Sigmoid colon (tissue), 7 donors: ENCODE measurements at regions of chr9 and their contacts with region 1.

Region 1: GRCh38 chr9:17531642-17532254 is 47.1 kb upstream of the SH3GL2 start:
- DNase-seq: no peak
- H3K4me3 ChIP-seq: no peak overlapping the region
- H3K27ac ChIP-seq: no peak overlapping the region
- H3K4me1 ChIP-seq: no peaks in the 10 kb centered on the region
- H3K27me3 ChIP-seq: no peaks in the 10 kb centered on the region
- CTCF ChIP-seq: peak in 2 of 4 experiments; percentile 39 to 43
- EP300 ChIP-seq: no peak
- POLR2A ChIP-seq: no peak

Region 2: GRCh38 chr9:17380126-17380861 is 151.5 kb before region 1 on chr9:
- intact Hi-C with region 1: no loop called
- DNase-seq: no peak
- H3K4me3 ChIP-seq: no peak overlapping the region
- H3K27ac ChIP-seq: no peak overlapping the region
- H3K4me1 ChIP-seq: no peaks in the 10 kb centered on the region
- H3K27me3 ChIP-seq: no peaks in the 10 kb centered on the region
- CTCF ChIP-seq: no peak
- EP300 ChIP-seq: no peak
- POLR2A ChIP-seq: no peak

Region 3: GRCh38 chr9:17588395-17588794 is 56.6 kb after region 1 on chr9:
- intact Hi-C with region 1: no loop called
- DNase-seq: no peak
- H3K4me3 ChIP-seq: no peak overlapping the region
- H3K27ac ChIP-seq: no peak overlapping the region
- H3K4me1 ChIP-seq: no peaks in the 10 kb centered on the region
- H3K27me3 ChIP-seq: no peaks in the 10 kb centered on the region
- CTCF ChIP-seq: no peak
- EP300 ChIP-seq: no peak
- POLR2A ChIP-seq: no peak

Region 4: DNA sequence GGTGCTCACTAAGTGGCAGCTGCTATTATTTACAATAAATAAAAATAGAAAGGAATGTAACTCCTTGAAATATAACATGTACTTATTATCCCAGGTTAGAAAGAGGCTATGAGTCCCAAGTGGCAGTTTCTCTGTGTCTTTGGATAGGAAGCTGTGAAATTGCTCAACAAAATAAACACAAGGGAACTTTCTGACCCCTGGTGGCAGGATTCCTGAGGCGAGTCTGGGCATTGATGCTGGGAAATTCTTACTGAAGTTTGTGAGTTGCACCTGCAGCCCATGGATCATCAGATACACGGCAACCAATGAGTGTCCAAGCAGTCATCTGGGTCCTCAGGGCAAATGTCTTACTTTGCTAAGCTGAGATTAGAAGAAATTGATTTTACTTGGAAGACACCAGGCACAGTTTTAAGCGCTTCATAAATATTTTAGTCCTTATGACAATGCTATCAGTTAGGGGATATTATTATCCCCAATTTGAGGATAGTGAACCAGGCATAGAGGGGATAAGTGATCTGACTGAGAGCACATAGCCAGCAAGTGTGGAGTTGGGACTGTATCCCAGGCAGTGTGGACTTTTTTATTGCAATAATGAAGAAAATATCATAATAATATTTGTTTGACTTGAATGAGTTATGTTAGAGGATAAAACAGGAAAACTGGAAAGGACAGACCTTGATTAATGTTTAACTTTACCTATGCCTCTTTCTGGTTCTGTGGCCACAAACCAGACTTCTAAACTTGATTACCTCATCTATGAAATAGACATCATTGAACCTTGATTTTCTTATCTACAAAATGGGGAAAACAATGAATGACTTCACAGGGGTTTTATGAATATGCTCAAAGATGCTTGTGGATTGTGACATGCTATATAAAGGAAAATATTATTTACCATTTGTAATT is 676.7 kb after region 1 on chr9:
- intact Hi-C with region 1: loop called (anchors 5 kb)
- DNase-seq: no peak
- H3K4me3 ChIP-seq: no peak overlapping the region
- H3K27ac ChIP-seq: peak overlapping the region in 1 of 4 donors; percentile 14
- H3K4me1 ChIP-seq: no peaks in the 10 kb centered on the region
- H3K27me3 ChIP-seq: no peaks in the 10 kb centered on the region
- CTCF ChIP-seq: peak in 3 of 4 experiments; percentile 36 to 61 (median 50)
- EP300 ChIP-seq: no peak
- POLR2A ChIP-seq: no peak